IMR-90 (cell line): ENCODE measurements at regions of chr6 and their contacts with region 1.

Region 1: DNA sequence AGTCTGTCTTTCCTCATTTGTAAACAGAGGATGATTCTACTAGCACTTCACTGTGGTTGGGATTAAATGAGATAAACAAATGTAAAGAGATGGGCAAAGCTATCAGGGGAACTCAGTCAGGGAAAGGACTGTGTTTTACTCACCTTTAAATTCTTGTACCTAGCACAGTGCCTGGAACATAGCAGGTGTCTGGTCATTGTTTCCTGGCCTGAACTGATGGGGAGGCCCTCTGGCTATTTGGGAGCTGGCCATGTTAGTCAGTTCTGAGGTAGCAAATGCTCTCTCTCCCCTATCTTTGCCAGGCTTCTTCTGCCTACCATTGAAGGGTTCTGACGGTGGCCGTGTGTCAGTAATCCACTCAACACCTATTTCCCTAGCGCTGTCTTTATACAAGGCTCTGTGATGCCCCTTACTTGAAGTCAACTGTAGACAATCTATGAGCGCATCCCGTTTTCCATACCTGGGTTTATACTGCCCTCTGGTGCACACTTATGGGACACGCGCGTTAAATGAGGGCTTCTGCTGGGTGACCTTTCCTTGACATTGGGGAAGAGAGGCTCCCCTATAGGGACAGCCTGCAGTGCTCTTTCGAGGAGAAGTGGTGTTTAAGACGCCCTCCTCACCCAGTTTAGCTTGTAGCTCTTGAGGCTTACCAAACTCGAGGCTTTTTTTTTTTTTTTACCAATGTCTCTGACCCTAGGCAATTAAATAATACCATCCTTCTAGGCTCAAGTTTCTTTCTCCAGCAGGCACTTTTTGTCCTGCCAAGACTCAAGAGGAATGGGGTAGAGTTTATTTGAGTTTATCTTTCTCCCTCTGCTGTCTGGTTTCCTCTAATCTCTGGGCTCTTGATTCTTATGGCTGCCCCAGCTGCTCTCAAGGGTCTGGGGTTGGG is 4.0 kb upstream of the SPATS1 start:
- DNase-seq: peak; percentile 56
- ATAC-seq: peak; percentile 91
- H3K4me3 ChIP-seq: no peak overlapping the region
- H3K27ac ChIP-seq: no peak overlapping the region
- H3K4me1 ChIP-seq: no peaks in the 10 kb centered on the region
- H3K27me3 ChIP-seq: peaks cover 55% of the 10 kb centered on the region
- CTCF ChIP-seq: peak; percentile 76
- POLR2A ChIP-seq: no peak
- RAD21 ChIP-seq: peak; percentile 89

Region 2: DNA sequence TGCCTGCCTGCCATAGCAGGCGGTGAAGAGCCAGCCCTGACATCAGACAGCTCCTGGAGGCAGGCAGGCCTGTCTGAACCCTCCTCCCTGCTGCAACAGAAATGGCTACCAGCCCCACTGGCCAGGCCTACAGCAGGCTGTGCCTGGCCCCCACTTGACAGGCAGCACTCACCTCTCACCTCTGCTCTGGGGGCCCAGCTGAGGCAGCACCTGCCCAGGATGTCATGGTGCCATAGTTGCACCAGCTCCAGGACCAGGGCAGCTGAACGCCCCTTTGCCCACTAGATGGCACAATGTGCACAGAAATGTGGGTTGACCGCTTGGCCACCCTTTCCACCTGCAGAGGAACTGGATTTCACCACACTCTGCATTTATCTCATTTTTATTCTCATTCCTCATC is 241.9 kb before region 1 on chr6:
- CTCF ChIA-PET with region 1: no interaction called
- POLR2A ChIA-PET with region 1: no interaction called
- dilution Hi-C with region 1: no loop called
- in situ Hi-C with region 1: no loop called
- intact Hi-C with region 1: loop called (anchors 1 kb)
- DNase-seq: peak; percentile 72
- ATAC-seq: peak; percentile 86
- H3K4me3 ChIP-seq: no peak overlapping the region
- H3K27ac ChIP-seq: no peak overlapping the region
- H3K4me1 ChIP-seq: no peaks in the 10 kb centered on the region
- H3K27me3 ChIP-seq: no peaks in the 10 kb centered on the region
- CTCF ChIP-seq: peak; percentile 93
- POLR2A ChIP-seq: no peak
- RAD21 ChIP-seq: peak; percentile 97

Region 3: GRCh38 chr6:44161997-44162338 is 176.5 kb before region 1 on chr6:
- CTCF ChIA-PET with region 1: no interaction called
- POLR2A ChIA-PET with region 1: no interaction called
- dilution Hi-C with region 1: no loop called
- in situ Hi-C with region 1: loop called (anchors 10 kb)
- intact Hi-C with region 1: no loop called
- DNase-seq: peak; percentile 67
- ATAC-seq: peak; percentile 38
- H3K4me3 ChIP-seq: no peak overlapping the region
- H3K27ac ChIP-seq: no peak overlapping the region
- H3K4me1 ChIP-seq: no peaks in the 10 kb centered on the region
- H3K27me3 ChIP-seq: peaks cover 26% of the 10 kb centered on the region
- CTCF ChIP-seq: no peak
- POLR2A ChIP-seq: no peak
- RAD21 ChIP-seq: no peak

Region 4: GRCh38 chr6:44172731-44173500 is 165.6 kb before region 1 on chr6:
- CTCF ChIA-PET with region 1: no interaction called
- POLR2A ChIA-PET with region 1: no interaction called
- dilution Hi-C with region 1: no loop called
- in situ Hi-C with region 1: loop called (anchors 10 kb)
- intact Hi-C with region 1: loop called (anchors 1 kb)
- DNase-seq: peak; percentile 65
- ATAC-seq: peak; percentile 99
- H3K4me3 ChIP-seq: no peak overlapping the region
- H3K27ac ChIP-seq: no peak overlapping the region
- H3K4me1 ChIP-seq: 0 out of 2 replicates have a peak, but pooled peaks cover 2% of the 10 kb centered on the region
- H3K27me3 ChIP-seq: peaks cover 21% of the 10 kb centered on the region
- CTCF ChIP-seq: peak; percentile 91
- POLR2A ChIP-seq: no peak
- RAD21 ChIP-seq: peak; percentile 89

Region 5: DNA sequence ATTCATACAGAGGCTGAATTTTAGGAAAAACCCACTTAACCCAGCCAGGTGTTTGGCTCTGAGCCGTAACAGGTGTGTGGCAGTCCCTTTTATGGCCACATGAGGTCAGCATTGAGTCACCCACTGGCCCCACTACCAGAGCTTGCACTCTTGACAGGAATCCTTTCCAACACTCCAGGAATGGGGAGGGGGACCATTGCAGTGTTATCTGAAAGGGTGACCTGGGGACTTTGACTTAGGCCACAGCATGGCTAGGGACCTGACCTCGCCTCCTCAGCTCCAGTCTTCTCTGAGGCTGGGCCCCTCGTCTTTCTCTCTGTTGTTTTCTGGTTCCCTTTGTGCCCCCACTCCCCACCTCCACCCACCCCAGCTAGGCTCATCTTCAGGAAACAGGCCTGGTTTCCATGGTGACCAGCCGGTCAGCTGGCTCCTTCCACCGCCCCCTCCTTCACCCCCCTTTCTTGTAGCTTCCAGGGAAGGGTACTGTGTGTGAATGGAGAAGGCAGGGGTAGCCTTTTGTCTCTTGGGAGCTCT is 70.3 kb before region 1 on chr6:
- CTCF ChIA-PET with region 1: interaction called, 12 read pairs
- POLR2A ChIA-PET with region 1: no interaction called
- dilution Hi-C with region 1: no loop called
- in situ Hi-C with region 1: no loop called
- intact Hi-C with region 1: loop called (anchors 1 kb)
- DNase-seq: peak; percentile 46
- ATAC-seq: no peak
- H3K4me3 ChIP-seq: no peak overlapping the region
- H3K27ac ChIP-seq: no peak overlapping the region
- H3K4me1 ChIP-seq: peaks cover 13% of the 10 kb centered on the region
- H3K27me3 ChIP-seq: peaks cover 46% of the 10 kb centered on the region
- CTCF ChIP-seq: peak; percentile 90
- POLR2A ChIP-seq: no peak
- RAD21 ChIP-seq: peak; percentile 89

Region 6: GRCh38 chr6:44284121-44284520 is 54.4 kb before region 1 on chr6:
- CTCF ChIA-PET with region 1: no interaction called
- POLR2A ChIA-PET with region 1: no interaction called
- dilution Hi-C with region 1: no loop called
- in situ Hi-C with region 1: loop called (anchors 5 kb)
- intact Hi-C with region 1: no loop called
- DNase-seq: no peak
- ATAC-seq: no peak
- H3K4me3 ChIP-seq: no peak overlapping the region
- H3K27ac ChIP-seq: no peak overlapping the region
- H3K4me1 ChIP-seq: no peaks in the 10 kb centered on the region
- H3K27me3 ChIP-seq: peaks cover 36% of the 10 kb centered on the region
- CTCF ChIP-seq: no peak
- POLR2A ChIP-seq: no peak
- RAD21 ChIP-seq: no peak

Region 7: GRCh38 chr6:44527181-44527580 is 188.7 kb after region 1 on chr6:
- CTCF ChIA-PET with region 1: no interaction called
- POLR2A ChIA-PET with region 1: no interaction called
- dilution Hi-C with region 1: no loop called
- in situ Hi-C with region 1: no loop called
- intact Hi-C with region 1: no loop called
- DNase-seq: no peak
- ATAC-seq: no peak
- H3K4me3 ChIP-seq: no peak overlapping the region
- H3K27ac ChIP-seq: no peak overlapping the region
- H3K4me1 ChIP-seq: no peaks in the 10 kb centered on the region
- H3K27me3 ChIP-seq: peaks cover 49% of the 10 kb centered on the region
- CTCF ChIP-seq: no peak
- POLR2A ChIP-seq: no peak
- RAD21 ChIP-seq: no peak